ENCODE measurements at regions of chr10 and their contacts with region 1.

Region 1: DNA sequence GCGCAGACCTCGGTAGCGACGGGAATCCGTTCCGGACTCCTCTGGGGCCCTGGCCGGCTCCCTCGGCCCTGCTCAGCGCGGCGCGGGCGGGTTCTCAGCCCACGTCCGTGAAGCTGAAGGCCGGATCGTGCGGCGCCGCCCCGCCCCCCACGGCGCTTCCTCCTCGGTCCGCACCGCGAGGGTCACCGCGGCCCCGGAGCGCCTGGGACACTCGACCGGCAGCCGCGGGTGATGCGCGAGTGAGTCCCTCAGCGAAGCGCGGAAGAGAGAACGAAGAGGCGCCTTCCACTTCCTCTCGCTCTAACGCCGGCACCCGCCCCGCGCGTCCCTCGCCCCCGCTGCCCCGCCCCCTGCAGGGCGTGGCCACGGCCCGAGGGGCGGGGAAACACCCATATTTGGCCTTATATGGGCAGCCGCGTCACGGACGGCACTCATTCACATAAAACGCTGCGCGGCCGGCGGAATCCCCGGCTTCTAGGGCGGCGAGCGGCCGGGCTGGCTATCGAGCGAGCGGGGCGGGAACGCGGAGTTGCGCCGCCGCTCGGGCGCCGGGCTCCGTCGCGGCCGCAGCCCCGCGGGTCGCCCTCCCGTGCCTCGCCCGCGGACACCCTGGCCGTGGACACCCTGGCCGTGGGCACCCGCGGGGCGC is at the start of gene DUSP5:
- DNase-seq: peak; percentile 85 to 93
- ATAC-seq: peak; percentile 48 to 50
- H3K4me3 ChIP-seq: peak within 1 kb of the TSS; percentile 86
- H3K27ac ChIP-seq: peak within 1 kb of the TSS; percentile 96
- H3K4me1 ChIP-seq: peaks cover 49% of the 10 kb centered on the region
- CTCF ChIP-seq: peak; percentile 19; the same call in 1 of the 3 replicates
- EP300 ChIP-seq: no peak
- POLR2A ChIP-seq: peak; percentile 98
- RAD21 ChIP-seq: peak; percentile 9 to 22; a peak in 3 of 5 replicates
- polyA plus RNA-seq, gene DUSP5: 152 and 171 TPM in 2 replicates

Region 2: DNA sequence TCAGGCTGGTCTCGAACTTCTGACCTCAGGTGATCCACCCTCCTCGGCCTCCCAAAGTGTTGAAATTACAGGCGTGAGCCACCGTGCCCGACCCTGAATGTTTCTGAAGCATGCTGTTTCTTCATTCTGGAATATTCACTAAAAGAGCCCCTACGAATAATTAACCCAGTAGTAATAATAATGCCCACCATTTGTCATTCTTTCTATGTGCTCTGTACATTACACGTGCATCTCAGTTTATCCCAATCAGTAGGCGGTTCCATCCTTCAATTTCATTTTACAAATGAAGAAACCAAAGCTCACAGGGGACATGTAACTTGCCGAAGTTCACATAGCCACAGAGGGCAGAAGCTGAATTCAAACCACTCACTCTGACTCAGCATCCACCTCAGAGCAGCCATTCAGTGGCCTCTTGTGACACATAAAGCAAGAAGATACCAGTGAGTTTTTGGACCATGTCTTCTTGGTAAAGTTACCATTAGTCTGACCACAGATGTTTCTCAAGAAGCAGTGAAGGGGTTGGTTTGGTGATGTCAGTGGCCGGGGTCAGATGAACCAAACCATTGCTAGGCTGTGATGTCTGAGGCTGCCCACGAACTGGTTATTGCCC is 71.8 kb before region 1 on chr10:
- CTCF ChIA-PET with region 1: interaction called, 7 read pairs
- POLR2A ChIA-PET with region 1: interaction called, 15 read pairs
- DNase-seq: peak; percentile 76 to 97
- ATAC-seq: peak; percentile 69 to 70
- H3K4me3 ChIP-seq: no peak overlapping the region
- H3K27ac ChIP-seq: peak overlapping the region; percentile 96 to 99
- H3K4me1 ChIP-seq: peaks cover 96% of the 10 kb centered on the region
- CTCF ChIP-seq: no peak
- EP300 ChIP-seq: peak in 1 of 2 experiments; percentile 30; a peak in 1 of 5 replicates
- POLR2A ChIP-seq: no peak
- RAD21 ChIP-seq: no peak; a peak in 1 of 5 replicates

Measured in A549 (cell line).